ENCODE measurements at regions of chr12 and their contacts with region 1.

Region 1: DNA sequence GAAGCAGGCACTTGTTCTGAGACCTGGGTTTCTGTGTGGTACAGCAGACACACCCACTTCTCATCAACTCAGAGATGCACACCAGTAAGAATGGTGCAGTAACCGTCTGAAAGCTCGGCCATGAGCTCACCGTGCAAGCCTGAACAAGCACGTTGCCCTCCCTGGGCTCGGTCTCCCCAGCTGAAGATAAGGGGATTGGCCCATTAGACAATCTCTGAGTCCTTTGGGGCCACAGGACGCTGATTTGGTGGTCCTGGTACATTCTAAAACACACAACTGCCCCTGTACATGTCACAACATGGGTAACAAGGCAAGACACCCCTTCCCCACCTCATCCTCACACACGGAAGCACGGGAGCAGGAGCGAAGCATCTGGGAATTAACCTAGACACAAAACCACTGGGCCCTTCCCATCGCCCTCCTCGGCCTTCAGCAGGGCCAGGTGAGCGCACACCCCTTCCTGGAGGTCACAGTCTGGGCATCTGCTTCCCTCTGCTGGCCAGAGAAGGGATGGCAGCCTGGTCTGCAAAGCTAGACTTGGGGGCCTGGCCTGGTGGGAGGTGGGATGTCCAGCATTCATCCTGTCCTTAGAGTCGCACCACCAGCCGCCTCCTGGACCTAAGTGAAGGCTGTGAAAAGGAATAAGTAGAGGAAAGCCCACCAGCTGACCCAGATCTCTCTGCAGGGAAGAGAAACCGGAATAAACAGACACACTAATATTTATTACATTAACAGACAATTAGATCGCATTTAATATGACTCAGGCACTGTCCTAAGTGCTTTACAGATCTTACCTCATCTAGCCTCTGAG is 18.9 kb upstream of the SMUG1 start:
- DNase-seq: peak; percentile 98
- ATAC-seq: peak; percentile 97
- H3K4me3 Mint-ChIP-seq: no peak overlapping the region
- H3K27ac Mint-ChIP-seq: no peak overlapping the region
- H3K4me1 Mint-ChIP-seq: peaks cover 9% of the 10 kb centered on the region; the same call in 1 of the 2 replicates
- H3K27me3 Mint-ChIP-seq: peaks cover 85% of the 10 kb centered on the region
- CTCF ChIP-seq: peak; percentile 88

Region 2: GRCh38 chr12:53995378-53996239 is 212.1 kb before region 1 on chr12:
- CTCF ChIA-PET with region 1: interaction called, 107 read pairs
- POLR2A ChIA-PET with region 1: no interaction called
- DNase-seq: peak; percentile 76
- ATAC-seq: peak; percentile 49
- H3K4me3 Mint-ChIP-seq: peak overlapping the region; percentile 56
- H3K27ac Mint-ChIP-seq: no peak overlapping the region
- H3K4me1 Mint-ChIP-seq: peaks cover 36% of the 10 kb centered on the region
- H3K27me3 Mint-ChIP-seq: peaks cover 100% of the 10 kb centered on the region
- CTCF ChIP-seq: no peak

Region 3: GRCh38 chr12:54024127-54024526 is 183.6 kb before region 1 on chr12:
- CTCF ChIA-PET with region 1: interaction called, 149 read pairs
- POLR2A ChIA-PET with region 1: no interaction called
- DNase-seq: no peak
- ATAC-seq: peak; percentile 55
- H3K4me3 Mint-ChIP-seq: no peak overlapping the region
- H3K27ac Mint-ChIP-seq: no peak overlapping the region
- H3K4me1 Mint-ChIP-seq: peaks cover 24% of the 10 kb centered on the region
- H3K27me3 Mint-ChIP-seq: peaks cover 100% of the 10 kb centered on the region
- CTCF ChIP-seq: no peak

Region 4: GRCh38 chr12:54134850-54135249 is 72.8 kb before region 1 on chr12:
- CTCF ChIA-PET with region 1: interaction called, 16 read pairs
- POLR2A ChIA-PET with region 1: no interaction called
- DNase-seq: no peak
- ATAC-seq: no peak
- H3K4me3 Mint-ChIP-seq: no peak overlapping the region
- H3K27ac Mint-ChIP-seq: no peak overlapping the region
- H3K4me1 Mint-ChIP-seq: peaks cover 11% of the 10 kb centered on the region; the same call in 1 of the 2 replicates
- H3K27me3 Mint-ChIP-seq: peaks cover 100% of the 10 kb centered on the region
- CTCF ChIP-seq: no peak

Region 5: GRCh38 chr12:54191550-54192022 is 16.1 kb before region 1 on chr12:
- CTCF ChIA-PET with region 1: interaction called, 67 read pairs
- POLR2A ChIA-PET with region 1: no interaction called
- DNase-seq: peak; percentile 87
- ATAC-seq: peak; percentile 81
- H3K4me3 Mint-ChIP-seq: no peak overlapping the region
- H3K27ac Mint-ChIP-seq: no peak overlapping the region
- H3K4me1 Mint-ChIP-seq: peaks cover 18% of the 10 kb centered on the region
- H3K27me3 Mint-ChIP-seq: peaks cover 73% of the 10 kb centered on the region
- CTCF ChIP-seq: peak; percentile 84

Measured in WTC11 (cell line).